GM10248 (cell line): ENCODE measurements at regions of chr7 and their contacts with region 1.

Region 1: GRCh38 chr7:114916261-114916892 is 5.5 kb upstream of the MDFIC start:
- DNase-seq: peak; percentile 55
- CTCF ChIP-seq: no peak

Region 2: DNA sequence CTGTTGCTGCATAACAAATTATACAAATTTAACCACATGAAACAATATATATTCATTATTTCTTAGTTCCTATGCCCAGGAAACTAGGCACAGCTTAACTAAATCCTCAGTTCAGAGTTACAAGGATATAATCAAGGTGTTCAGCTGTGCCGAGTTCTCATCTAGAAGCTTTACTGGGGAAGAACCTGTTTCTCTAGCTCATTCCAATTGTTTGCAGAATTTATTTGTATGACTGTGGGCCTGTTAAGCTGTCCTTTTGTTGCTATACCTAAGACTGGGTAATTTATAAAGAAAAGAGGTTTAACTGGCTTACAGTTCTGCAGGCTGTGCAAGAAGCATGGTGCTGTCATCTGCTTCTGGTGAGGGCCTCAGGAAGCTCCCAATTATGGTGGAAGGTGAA is 16.2 kb before region 1 on chr7:
- CTCF ChIA-PET with region 1: interaction called, 10 read pairs
- POLR2A ChIA-PET with region 1: no interaction called
- DNase-seq: no peak
- CTCF ChIP-seq: no peak

Region 3: GRCh38 chr7:114930829-114931655 is 14.7 kb after region 1 on chr7:
- CTCF ChIA-PET with region 1: interaction called, 13 read pairs
- POLR2A ChIA-PET with region 1: no interaction called
- DNase-seq: no peak
- CTCF ChIP-seq: no peak